ENCODE measurements at regions of chr16 and their contacts with region 1.

Region 1: GRCh38 chr16:83956336-83957289 is 3.6 kb downstream of the OSGIN1 start:
- DNase-seq: peak; percentile 83
- ATAC-seq: peak; percentile 3 to 12

Region 2: DNA sequence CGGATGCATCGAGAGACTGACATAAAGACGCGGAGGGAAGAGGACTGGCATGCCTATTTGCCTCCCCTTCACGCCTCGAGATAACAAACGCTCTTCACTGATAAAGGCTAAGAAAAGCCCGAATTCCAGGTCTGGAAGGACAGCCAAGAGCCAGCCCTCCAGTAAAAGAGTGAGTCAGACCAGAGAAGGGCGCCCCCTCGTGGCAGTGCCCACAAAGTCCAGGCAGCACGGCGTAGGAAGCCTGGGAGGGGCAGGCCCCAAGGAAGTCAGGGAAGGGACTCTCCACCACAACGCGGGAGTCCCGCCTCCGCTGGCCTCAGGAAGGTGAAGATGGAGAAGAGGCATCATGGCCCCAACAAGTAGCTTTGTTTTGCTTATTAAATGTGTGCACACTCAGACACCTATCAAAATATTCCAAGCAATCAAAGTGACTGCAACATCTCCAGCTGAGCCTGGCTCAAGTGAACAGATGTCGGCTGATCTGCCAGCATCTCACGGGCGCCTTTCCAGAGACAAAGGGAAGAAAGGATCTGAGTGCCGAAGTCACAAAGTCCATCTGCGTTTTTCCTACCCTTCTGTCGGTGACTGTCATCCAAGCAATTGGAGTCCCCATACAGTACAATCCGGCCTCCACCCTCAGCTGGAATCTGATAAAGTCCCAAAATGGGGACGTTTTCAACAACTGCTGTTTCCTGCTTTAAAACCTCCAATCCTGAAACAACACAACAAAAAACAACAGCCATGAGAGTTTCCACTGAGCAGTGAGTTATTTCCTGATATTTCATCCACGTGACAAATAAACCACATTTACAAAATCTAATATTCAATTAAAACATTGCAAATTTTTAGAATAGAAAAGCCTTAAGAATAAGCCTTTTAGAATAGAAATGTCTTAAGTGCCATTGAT is 106.4 kb after region 1 on chr16:
- intact Hi-C with region 1: loop called in 1 of 2 experiments (anchors 2 kb)
- DNase-seq: peak; percentile 85
- ATAC-seq: peak; percentile 92

Region 3: DNA sequence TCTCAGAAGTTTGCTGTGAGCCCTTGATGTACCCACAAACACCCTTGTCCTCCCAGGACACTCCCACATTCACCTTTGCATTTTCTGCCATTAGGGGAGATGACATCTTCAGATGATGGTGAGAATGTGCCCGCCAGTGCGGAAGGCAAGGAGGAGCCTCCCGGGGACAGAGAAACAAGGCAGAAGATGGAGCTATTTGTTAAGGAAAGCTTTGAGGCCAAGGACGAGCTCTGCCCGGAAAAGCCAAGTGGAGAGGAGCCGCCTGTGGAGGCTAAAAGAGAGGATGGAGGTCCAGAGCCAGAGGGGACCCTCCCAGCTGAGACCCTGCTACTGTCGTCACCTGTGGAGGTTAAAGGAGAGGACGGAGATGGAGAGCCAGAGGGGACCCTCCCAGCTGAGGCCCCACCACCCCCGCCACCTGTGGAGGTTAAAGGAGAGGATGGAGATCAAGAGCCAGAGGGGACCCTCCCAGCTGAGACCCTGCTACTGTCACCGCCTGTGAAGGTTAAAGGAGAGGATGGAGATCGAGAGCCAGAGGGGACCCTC is 213.2 kb after region 1 on chr16:
- intact Hi-C with region 1: loop called in 1 of 2 experiments (anchors 5 kb)
- DNase-seq: no peak
- ATAC-seq: no peak

Measured in left cardiac atrium (tissue), 4 donors.